Lower lobe of right lung (tissue), 2 donors: ENCODE measurements at regions of chr1 and their contacts with region 1.

Region 1: DNA sequence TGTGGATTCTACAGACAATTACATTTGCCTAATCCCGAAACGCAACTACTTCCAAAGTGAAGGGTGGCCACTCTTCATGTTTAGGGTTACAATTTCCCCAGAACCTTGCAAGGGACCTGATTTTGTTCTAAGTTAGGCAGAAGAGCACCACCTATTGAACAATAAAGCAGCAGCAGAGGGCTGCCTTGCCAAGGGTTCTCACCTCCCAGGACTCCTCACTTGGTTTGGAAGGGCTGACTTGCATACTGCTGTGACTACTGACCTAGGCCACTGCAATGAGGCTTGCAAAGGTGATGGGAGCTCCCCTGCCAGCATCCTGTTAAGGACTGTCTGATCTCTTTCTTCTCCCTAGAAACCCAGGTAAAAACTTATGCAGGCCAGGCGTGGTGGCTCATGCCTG is 14.2 kb downstream of the MTOR start:
- DNase-seq: no peak
- ATAC-seq: no peak
- H3K4me3 ChIP-seq: no peak overlapping the region
- H3K27ac ChIP-seq: no peak overlapping the region
- H3K4me1 ChIP-seq: no peaks in the 10 kb centered on the region
- H3K27me3 ChIP-seq: no peaks in the 10 kb centered on the region
- CTCF ChIP-seq: no peak

Region 2: DNA sequence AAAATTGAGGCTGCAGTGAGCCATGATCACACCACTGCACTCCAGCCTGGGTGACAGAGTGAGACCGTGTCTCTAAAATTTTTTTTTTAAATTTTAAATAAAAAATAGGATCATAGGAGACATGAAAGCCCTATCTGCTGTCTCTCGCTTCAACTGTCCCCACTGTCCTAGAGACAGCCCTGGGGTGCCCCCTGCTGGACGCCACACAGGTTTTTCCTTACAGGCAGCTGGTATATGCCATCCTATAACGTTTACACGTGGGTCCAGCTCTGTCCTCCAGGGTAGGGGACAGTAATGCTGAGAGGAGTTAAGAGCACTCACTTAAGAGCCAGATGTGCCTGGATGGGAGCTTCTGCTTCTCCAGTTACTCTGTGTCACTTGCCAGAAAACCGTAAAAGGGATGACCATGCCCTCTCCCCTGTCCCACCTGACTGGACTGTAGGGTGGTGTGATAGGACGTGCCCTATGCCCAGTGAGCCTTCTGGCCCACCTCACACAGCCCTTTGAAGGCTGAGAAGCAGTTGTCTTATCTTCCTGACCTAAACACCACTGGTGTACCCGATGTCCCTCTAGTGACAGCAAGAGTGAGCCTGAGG is 397.6 kb after region 1 on chr1:
- intact Hi-C with region 1: loop called (anchors 10 kb)
- DNase-seq: peak; percentile 85
- ATAC-seq: peak in 1 of 2 donors; percentile 42
- H3K4me3 ChIP-seq: no peak overlapping the region
- H3K27ac ChIP-seq: no peak overlapping the region
- H3K4me1 ChIP-seq: peaks cover 26% of the 10 kb centered on the region
- H3K27me3 ChIP-seq: peaks cover 25% of the 10 kb centered on the region
- CTCF ChIP-seq: peak; percentile 81